ENCODE measurements at regions of chr1 and their contacts with region 1.

Region 1: DNA sequence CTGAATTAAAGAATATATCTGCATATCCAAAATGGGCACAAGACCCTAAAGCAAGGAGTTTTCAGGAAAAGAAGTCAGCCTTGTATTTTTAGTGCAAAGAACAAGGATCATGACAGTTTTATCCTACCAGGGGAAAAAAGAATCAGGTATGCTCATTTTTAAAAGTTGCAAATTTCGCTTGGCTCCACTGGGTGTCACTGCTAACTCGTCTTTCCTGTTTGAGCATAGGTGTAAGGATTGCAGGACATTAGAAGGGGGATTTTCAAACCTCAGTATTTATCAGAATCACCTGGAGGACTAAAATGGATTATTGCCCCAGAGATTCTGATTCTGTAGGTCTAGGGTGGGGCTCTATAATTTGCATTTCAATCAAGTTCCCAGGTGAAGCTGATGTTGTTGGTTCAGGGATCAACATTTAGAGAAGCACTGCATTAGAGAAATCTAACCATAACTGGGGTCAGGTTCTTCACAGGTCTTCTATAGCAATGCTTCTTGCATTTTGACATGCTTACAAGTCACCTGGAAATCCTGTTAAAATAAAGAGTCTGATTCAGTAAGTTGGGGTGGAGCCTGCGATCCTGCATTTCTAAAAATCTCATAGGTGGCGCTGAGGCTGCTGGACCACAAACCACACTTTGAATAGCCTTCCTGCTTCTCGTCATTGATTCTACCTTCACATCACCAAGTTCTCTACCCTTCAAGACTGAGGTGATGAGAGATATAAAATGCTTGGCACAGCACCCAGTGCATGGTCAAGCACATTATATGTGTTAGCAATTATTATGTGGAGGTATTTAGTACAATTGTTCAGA is 39.6 kb downstream of the NUF2 start:
- DNase-seq: peak; percentile 58
- H3K4me3 ChIP-seq: no peak overlapping the region
- H3K27ac ChIP-seq: no peak overlapping the region
- H3K4me1 ChIP-seq: peaks cover 8% of the 10 kb centered on the region
- H3K27me3 ChIP-seq: no peaks in the 10 kb centered on the region
- CTCF ChIP-seq: peak; percentile 71

Region 2: DNA sequence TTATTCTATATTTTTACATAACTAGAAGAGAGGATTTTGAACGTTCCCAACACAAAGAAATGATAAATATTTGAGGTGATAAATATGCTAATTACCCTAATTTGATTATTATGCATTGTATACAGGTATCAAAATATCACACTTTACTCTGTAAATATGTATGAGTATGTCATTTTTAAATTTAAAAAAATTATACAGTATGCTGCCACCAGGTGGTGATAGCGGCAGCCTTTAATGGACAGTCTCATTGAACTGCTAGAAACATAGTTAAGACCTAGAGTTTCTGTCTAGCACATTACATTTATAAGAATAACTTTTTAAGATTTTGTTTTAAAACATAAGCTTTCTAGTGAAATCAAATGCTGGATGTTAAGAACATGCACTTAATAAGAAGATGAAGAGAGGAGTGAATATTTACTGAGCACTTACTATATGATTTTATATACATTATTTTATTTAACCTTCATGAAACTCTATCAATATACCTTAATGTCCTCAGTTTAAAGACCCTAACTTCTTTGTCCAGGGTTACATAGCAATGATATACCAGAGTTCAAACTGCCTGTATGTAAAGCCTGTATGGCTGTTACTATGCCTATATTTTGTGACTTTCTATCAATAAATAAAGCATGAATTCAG is 167.5 kb after region 1 on chr1:
- CTCF ChIA-PET with region 1: no interaction called
- POLR2A ChIA-PET with region 1: no interaction called
- intact Hi-C with region 1: loop called (anchors 2 kb)
- DNase-seq: peak; percentile 71
- H3K4me3 ChIP-seq: no peak overlapping the region
- H3K27ac ChIP-seq: peak overlapping the region; percentile 25
- H3K4me1 ChIP-seq: peaks cover 19% of the 10 kb centered on the region
- H3K27me3 ChIP-seq: no peaks in the 10 kb centered on the region
- CTCF ChIP-seq: peak; percentile 77

Region 3: DNA sequence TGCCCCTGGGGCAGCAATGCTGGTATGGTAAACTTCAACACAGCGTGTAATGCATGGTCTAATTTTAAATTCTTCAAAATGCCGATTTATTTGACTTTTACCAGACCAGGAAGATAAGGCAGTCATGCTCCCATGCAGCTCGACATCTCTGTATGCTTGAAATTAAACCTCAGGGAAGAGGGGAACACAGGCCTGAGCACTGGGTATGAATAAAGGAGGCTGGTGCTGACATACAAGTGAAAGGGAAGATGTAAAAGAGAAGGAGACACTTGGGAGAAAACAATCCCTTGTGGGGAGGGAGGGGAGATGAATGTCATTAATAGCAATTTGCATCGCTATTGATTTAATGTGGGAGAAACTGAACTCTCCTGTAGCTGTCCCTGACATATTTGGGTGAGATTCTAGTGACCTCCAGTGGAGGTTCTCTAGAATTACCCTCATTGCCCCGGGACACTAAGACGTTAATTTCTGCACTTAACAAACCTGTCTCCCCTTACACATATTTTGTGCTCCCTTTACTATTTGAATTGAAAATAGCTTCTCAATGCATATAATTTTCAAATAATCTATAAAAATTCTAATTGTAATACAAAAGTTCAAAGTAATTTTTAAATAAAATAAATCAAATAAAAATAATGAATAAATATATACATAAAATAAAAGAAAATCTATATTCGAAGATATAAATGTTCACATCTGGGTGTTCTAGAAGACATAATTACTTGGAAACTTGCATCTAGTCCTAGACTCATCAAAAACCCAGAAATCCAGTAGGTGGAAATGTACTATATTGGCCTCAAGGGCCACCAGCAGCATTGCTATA is 1712.1 kb after region 1 on chr1:
- CTCF ChIA-PET with region 1: interaction called, 4 read pairs
- POLR2A ChIA-PET with region 1: no interaction called
- intact Hi-C with region 1: loop called (anchors 1 kb)
- DNase-seq: peak; percentile 75
- H3K4me3 ChIP-seq: no peak overlapping the region
- H3K27ac ChIP-seq: no peak overlapping the region
- H3K4me1 ChIP-seq: no peaks in the 10 kb centered on the region
- H3K27me3 ChIP-seq: no peaks in the 10 kb centered on the region
- CTCF ChIP-seq: peak; percentile 74

Measured in A673 (cell line).